Natural killer cell (primary cell): ENCODE measurements at regions of chr3 and their contacts with region 1.

Region 1: GRCh38 chr3:113552851-113553250 is 20.5 kb downstream of the SIDT1 start:
- DNase-seq: peak in 1 of 2 donors; percentile 70
- ATAC-seq: peak; percentile 61 to 87 (median 80)
- H3K4me3 ChIP-seq: no peak overlapping the region
- H3K4me3 Mint-ChIP-seq: no peak overlapping the region
- H3K27ac ChIP-seq: no peak overlapping the region
- H3K27ac Mint-ChIP-seq: peak overlapping the region; percentile 6 to 15
- H3K4me1 ChIP-seq: no peaks in the 10 kb centered on the region
- H3K4me1 Mint-ChIP-seq: peaks cover 55 to 60% of the 10 kb centered on the region in 2 donors
- H3K27me3 ChIP-seq: no peaks in the 10 kb centered on the region
- H3K27me3 Mint-ChIP-seq: no peaks in the 10 kb centered on the region
- CTCF ChIP-seq: peak; percentile 15

Region 2: GRCh38 chr3:113495035-113495434 is 57.8 kb before region 1 on chr3:
- intact Hi-C with region 1: loop called (anchors 1 kb)
- DNase-seq: peak in 1 of 2 donors; percentile 71
- ATAC-seq: peak in 1 of 3 donors; percentile 52
- H3K4me3 ChIP-seq: no peak overlapping the region
- H3K4me3 Mint-ChIP-seq: no peak overlapping the region
- H3K27ac ChIP-seq: no peak overlapping the region
- H3K27ac Mint-ChIP-seq: no peak overlapping the region
- H3K4me1 ChIP-seq: no peaks in the 10 kb centered on the region
- H3K4me1 Mint-ChIP-seq: peaks cover 2 to 3% of the 10 kb centered on the region in 2 donors
- H3K27me3 ChIP-seq: no peaks in the 10 kb centered on the region
- H3K27me3 Mint-ChIP-seq: no peaks in the 10 kb centered on the region
- CTCF ChIP-seq: peak; percentile 44

Region 3: GRCh38 chr3:113594066-113594465 is 41.2 kb after region 1 on chr3:
- intact Hi-C with region 1: no loop called
- DNase-seq: no peak
- ATAC-seq: no peak
- H3K4me3 ChIP-seq: no peak overlapping the region
- H3K4me3 Mint-ChIP-seq: no peak overlapping the region
- H3K27ac ChIP-seq: no peak overlapping the region
- H3K27ac Mint-ChIP-seq: peak overlapping the region in 1 of 2 donors; percentile 47
- H3K4me1 ChIP-seq: no peaks in the 10 kb centered on the region
- H3K4me1 Mint-ChIP-seq: peaks cover 0 to 6% of the 10 kb centered on the region in 2 donors
- H3K27me3 ChIP-seq: no peaks in the 10 kb centered on the region
- H3K27me3 Mint-ChIP-seq: no peaks in the 10 kb centered on the region
- CTCF ChIP-seq: no peak